Activated CD4-positive, alpha-beta T cell treated with anti-CD3 and anti-CD28 coated beads, Interleukin-2, amount 10 ng/mL, durations not matched to agents 24 days and 14 days (primary cell): ENCODE measurements at regions of chr1 and their contacts with region 1.

Region 1: DNA sequence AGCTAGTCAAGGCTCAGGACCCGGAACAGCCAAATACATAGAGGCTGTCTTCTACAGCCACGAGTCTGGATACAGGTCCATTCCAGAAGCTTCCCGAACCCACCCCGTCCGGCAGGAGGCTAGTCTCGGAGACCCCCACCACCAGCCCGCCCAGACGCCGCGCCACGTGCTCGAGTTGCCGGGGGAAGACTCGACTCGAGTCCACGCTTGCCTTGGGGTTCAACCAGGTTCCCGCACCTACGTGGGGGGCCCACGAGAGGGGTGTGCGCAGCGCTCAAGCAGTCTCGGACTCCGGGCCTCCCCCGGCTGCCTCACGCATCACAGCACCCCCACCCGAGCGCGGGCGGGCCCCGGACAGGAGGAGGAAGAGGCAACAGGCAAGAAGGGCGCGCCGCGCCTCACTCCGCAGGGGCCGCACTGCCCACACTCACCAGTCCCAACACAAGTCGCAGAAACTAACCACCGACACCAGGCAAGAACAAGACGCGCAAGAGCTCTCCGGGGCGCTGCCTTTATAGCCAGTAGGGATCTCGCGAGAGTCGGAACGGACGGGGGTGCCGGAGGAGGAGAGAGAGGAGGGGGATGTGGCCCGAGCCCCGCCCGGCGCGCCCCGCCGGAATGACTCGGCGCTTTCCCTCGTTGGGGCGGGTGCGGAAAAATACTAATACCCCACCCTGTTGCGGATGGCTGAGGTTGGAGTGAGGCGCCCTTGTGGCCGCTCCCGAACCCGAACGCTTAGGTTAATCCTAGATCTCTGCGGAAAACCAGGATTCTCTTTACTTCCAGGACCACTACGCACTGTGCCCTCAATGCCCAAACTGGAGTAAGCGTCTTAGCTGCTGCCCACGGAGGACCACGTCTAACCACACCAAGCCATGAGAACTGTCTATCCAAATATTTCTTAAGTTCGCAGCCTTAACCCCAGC is at the start of gene PRDX1:
- DNase-seq: peak; percentile 99
- H3K4me3 Mint-ChIP-seq: peak within 1 kb of the TSS; percentile 99
- H3K27ac Mint-ChIP-seq: peak within 1 kb of the TSS; percentile 94
- H3K4me1 Mint-ChIP-seq: peaks cover 31% of the 10 kb centered on the region
- H3K27me3 Mint-ChIP-seq: peaks cover 2% of the 10 kb centered on the region
- total RNA-seq, gene PRDX1: 682 and 710 TPM in 2 replicates

Region 2: GRCh38 chr1:45196873-45197272 is 324.8 kb before region 1 on chr1:
- intact Hi-C with region 1: no loop called
- DNase-seq: no peak
- H3K4me3 Mint-ChIP-seq: no peak overlapping the region
- H3K27ac Mint-ChIP-seq: no peak overlapping the region
- H3K4me1 Mint-ChIP-seq: no peaks in the 10 kb centered on the region
- H3K27me3 Mint-ChIP-seq: peaks cover 23% of the 10 kb centered on the region

Region 3: GRCh38 chr1:45499415-45499769 is 22.3 kb before region 1 on chr1:
- intact Hi-C with region 1: loop called (anchors 2 kb)
- DNase-seq: peak; percentile 74
- H3K4me3 Mint-ChIP-seq: peak overlapping the region; percentile 95
- H3K27ac Mint-ChIP-seq: peak overlapping the region; percentile 90
- H3K4me1 Mint-ChIP-seq: peaks cover 30% of the 10 kb centered on the region
- H3K27me3 Mint-ChIP-seq: no peaks in the 10 kb centered on the region

Region 4: GRCh38 chr1:45543581-45544417 is 22.1 kb after region 1 on chr1:
- intact Hi-C with region 1: loop called (anchors 1 kb)
- DNase-seq: peak; percentile 91
- H3K4me3 Mint-ChIP-seq: peak overlapping the region; percentile 76
- H3K27ac Mint-ChIP-seq: peak overlapping the region; percentile 87
- H3K4me1 Mint-ChIP-seq: peaks cover 31% of the 10 kb centered on the region
- H3K27me3 Mint-ChIP-seq: no peaks in the 10 kb centered on the region

Region 5: GRCh38 chr1:45550401-45551351 is 29.0 kb after region 1 on chr1 and contains the start of gene AKR1A1:
- intact Hi-C with region 1: loop called (anchors 1 kb)
- DNase-seq: peak; percentile 97
- H3K4me3 Mint-ChIP-seq: peak within 1 kb of the TSS; percentile 98
- H3K27ac Mint-ChIP-seq: peak within 1 kb of the TSS; percentile 94
- H3K4me1 Mint-ChIP-seq: peaks cover 17% of the 10 kb centered on the region
- H3K27me3 Mint-ChIP-seq: no peaks in the 10 kb centered on the region
- total RNA-seq, gene AKR1A1: 193 and 199 TPM in 2 replicates

Region 6: DNA sequence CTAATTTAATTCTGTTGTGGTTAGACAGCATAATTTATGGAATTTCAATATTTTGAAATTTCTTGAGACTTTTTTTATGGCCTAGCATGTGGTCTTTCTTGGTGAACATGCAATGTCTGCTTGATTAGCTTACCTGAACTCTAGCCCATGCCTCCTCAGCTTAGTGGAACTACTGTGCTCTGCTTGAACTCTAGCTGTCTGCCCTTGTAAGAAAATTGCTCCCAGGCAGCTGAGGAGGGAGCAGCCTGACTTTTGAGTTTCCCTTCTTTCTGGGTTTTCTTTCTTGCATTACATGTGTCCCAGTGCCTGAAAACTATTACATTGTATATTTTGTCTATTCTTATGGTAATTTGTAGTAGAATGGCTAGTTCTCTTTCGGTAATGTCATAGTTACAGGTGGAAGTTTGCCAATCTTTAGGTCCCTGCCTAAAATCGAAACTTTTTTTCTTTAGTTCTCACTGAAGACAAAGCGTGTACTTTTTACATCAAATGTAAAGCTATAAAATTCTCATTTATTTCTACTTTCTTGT is 387.0 kb after region 1 on chr1:
- intact Hi-C with region 1: no loop called
- DNase-seq: no peak
- H3K4me3 Mint-ChIP-seq: no peak overlapping the region
- H3K27ac Mint-ChIP-seq: no peak overlapping the region
- H3K4me1 Mint-ChIP-seq: peaks cover 10% of the 10 kb centered on the region
- H3K27me3 Mint-ChIP-seq: no peaks in the 10 kb centered on the region

Region 7: DNA sequence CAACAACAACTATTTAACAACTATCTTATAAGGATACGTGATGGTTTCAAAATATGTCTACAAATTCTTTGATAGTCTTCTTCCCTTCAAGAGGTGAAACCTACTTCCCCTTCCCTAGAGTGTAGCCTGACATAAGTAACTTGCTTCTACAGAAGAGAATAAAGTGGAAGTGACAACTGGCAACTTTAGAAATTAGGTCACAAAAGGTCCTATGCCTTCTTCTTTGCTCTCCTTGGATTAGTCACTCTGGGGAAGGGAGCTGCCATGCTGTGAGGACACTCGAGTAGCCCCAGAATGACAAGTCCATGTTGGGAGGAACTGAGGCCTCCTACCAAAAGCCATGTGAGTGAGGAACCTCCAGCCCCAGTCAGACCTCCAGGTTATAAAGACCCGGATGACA is 1178.0 kb after region 1 on chr1:
- intact Hi-C with region 1: no loop called
- DNase-seq: no peak
- H3K4me3 Mint-ChIP-seq: no peak overlapping the region
- H3K27ac Mint-ChIP-seq: no peak overlapping the region
- H3K4me1 Mint-ChIP-seq: peaks cover 16% of the 10 kb centered on the region
- H3K27me3 Mint-ChIP-seq: no peaks in the 10 kb centered on the region